ENCODE measurements at regions of chr10 and their contacts with region 1.

Region 1: GRCh38 chr10:101141616-101142532 is 10.8 kb downstream of the TLX1 start:
- DNase-seq: peak; percentile 77
- H3K4me3 ChIP-seq: no peak overlapping the region
- H3K27ac ChIP-seq: no peak overlapping the region
- H3K4me1 ChIP-seq: peaks cover 34% of the 10 kb centered on the region
- H3K27me3 ChIP-seq: peaks cover 100% of the 10 kb centered on the region
- CTCF ChIP-seq: peak; percentile 98

Region 2: DNA sequence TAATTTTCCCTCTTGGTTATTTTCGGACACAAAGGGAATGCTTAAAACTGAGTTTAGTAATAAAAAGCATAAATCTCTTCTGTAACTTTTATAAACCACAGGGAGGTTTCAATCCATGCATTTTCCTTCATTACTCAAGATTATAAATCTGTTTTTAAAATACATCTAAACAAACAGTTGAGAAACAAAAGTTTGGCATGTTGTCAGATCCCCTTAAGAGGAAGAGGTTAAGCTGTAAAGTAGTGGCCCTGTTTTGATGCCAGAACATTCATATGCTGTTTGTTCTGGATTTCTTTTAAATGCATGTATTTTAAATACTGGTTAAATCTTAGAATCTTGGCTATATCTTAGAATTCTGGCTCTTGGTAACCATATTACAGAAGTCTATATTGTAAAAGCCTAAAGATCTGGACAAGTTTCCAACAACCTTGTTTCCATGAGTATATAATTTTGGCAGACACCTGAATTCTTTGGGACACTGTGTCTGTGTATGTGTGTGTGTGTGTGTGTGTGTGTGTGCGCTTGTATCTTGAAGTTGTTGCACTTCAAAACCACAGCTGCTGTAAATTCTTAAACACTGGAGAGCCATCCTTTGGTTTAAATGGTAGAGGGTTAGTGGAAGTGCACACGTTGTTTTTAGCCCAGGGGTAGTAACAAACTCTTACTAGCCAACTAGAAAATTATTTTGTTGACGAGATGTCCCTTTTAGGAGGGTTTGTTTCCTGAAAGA is 179.4 kb before region 1 on chr10:
- intact Hi-C with region 1: no loop called
- DNase-seq: no peak
- H3K4me3 ChIP-seq: no peak overlapping the region
- H3K27ac ChIP-seq: no peak overlapping the region
- H3K4me1 ChIP-seq: no peaks in the 10 kb centered on the region
- H3K27me3 ChIP-seq: no peaks in the 10 kb centered on the region
- CTCF ChIP-seq: no peak

Region 3: DNA sequence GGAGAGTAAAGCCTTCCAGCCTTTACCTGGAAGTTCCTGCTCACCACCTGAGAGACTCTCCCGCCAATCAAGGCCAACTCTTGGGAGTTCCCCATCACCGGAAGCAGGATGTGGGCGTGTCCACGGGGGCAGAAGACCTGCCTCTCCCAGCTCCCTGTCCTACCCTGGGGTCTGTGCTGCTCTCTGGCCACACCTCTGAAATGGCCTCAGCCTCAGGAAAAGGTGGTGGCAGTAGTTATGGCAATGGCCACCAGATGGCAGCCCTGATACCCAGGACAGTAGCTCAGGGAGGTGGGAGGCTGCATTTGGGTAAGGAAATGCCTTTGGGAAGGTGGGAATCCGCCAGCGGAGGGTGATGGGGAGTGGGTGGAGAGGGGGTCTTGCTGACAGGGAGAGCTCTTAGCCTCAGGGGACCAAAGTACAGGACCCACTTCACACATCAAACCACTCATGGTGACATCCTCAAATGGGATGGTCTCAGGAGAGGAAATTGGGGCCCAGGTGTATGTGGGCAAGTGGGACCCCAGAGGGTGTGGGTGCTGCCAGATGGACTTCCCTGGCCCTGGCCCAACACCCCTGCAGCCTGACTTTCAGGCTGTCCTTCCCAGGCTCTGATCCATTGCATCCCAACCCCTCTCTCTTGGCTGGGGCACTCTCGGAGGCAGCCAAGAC is 46.2 kb before region 1 on chr10:
- intact Hi-C with region 1: loop called (anchors 5 kb)
- DNase-seq: peak; percentile 55
- H3K4me3 ChIP-seq: no peak overlapping the region
- H3K27ac ChIP-seq: no peak overlapping the region
- H3K4me1 ChIP-seq: no peaks in the 10 kb centered on the region
- H3K27me3 ChIP-seq: peaks cover 100% of the 10 kb centered on the region
- CTCF ChIP-seq: peak; percentile 80